Endothelial cell of umbilical vein (primary cell): ENCODE measurements at regions of chr10 and their contacts with region 1.

Region 1: GRCh38 chr10:89954787-89955566 is 253.6 kb downstream of the KIF20B start:
- DNase-seq: peak; percentile 4
- H3K4me3 ChIP-seq: no peak overlapping the region
- H3K27ac ChIP-seq: no peak overlapping the region
- H3K4me1 ChIP-seq: no peaks in the 10 kb centered on the region
- H3K27me3 ChIP-seq: peaks cover 0 to 12% of the 10 kb centered on the region in 2 experiments
- CTCF ChIP-seq: no peak
- POLR2A ChIP-seq: no peak

Region 2: DNA sequence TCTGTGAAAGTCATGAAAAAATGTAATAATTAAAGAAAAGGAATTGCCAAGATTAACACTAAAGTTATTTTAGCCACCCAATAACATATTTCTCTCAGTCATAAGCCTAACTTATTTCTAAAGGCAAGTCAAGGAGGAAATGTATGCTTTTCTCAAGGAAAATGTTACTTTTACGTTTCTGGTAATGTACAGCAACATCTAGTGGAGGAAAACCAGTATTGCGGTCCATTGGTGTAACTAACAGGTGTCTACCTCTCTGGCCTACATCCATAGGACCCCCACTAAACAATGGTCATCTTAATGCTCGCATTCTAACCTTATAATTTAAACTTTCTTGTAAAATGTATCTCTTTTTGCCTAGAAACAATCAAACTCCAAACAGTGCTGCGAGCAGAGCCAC is 183.9 kb after region 1 on chr10:
- CTCF ChIA-PET with region 1: interaction called, 4 read pairs
- POLR2A ChIA-PET with region 1: no interaction called
- dilution Hi-C with region 1: no loop called
- intact Hi-C with region 1: loop called (anchors 2 kb)
- DNase-seq: peak; percentile 6
- H3K4me3 ChIP-seq: no peak overlapping the region
- H3K27ac ChIP-seq: no peak overlapping the region
- H3K4me1 ChIP-seq: no peaks in the 10 kb centered on the region
- H3K27me3 ChIP-seq: peaks cover 0 to 4% of the 10 kb centered on the region in 2 experiments
- CTCF ChIP-seq: peak; percentile 28 to 31
- POLR2A ChIP-seq: no peak

Region 3: DNA sequence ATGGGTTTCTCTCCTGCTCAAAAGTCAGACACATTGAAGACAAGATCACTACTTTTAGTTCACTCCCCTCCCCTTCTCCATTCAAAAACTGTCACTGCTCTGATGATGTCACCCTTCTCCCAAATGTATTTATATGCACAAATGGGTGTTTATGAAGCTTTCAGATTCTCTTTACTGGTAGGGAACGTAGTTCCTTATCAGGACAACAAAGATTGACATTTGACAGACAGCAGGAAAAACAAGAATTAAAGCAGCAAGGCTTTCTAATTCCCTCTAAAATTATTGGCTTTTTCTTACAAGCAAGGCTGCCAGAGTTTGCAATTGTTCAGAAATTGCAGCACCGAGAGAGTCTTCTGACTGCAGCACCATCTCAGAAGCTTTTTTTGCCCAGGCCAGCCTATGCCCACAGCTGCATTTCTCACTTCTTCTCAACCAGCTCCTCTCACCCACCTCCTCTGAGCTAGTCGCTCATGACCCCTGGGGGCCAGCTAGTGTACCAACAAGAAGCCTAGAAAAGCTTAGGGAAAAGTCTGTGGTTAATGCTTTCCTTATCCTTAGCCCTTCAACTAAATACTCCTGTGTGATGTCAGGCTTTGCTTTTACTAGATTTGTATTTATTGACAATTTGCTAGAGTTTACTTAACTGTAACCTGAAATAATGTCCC is 637.8 kb after region 1 on chr10:
- CTCF ChIA-PET with region 1: interaction called, 10 read pairs
- POLR2A ChIA-PET with region 1: no interaction called
- dilution Hi-C with region 1: no loop called
- intact Hi-C with region 1: loop called (anchors 1 kb)
- DNase-seq: peak; percentile 55
- H3K4me3 ChIP-seq: no peak overlapping the region
- H3K27ac ChIP-seq: no peak overlapping the region
- H3K4me1 ChIP-seq: no peaks in the 10 kb centered on the region
- H3K27me3 ChIP-seq: peaks cover 6 to 10% of the 10 kb centered on the region in 2 experiments
- CTCF ChIP-seq: peak; percentile 61 to 72
- POLR2A ChIP-seq: no peak

Region 4: GRCh38 chr10:90862908-90863514 is 908.0 kb after region 1 on chr10:
- CTCF ChIA-PET with region 1: interaction called, 4 read pairs
- POLR2A ChIA-PET with region 1: no interaction called
- dilution Hi-C with region 1: no loop called
- intact Hi-C with region 1: loop called (anchors 10 kb)
- DNase-seq: peak; percentile 49
- H3K4me3 ChIP-seq: no peak overlapping the region
- H3K27ac ChIP-seq: no peak overlapping the region
- H3K4me1 ChIP-seq: peaks cover 19% of the 10 kb centered on the region
- H3K27me3 ChIP-seq: peaks cover 24 to 43% of the 10 kb centered on the region in 2 experiments
- CTCF ChIP-seq: peak; percentile 57 to 62
- POLR2A ChIP-seq: no peak